ENCODE measurements at regions of chr9 and their contacts with region 1.

Region 1: GRCh38 chr9:35116898-35117551 is 1.4 kb upstream of the ATOSB start:
- DNase-seq: peak; percentile 84
- H3K4me3 ChIP-seq: peak overlapping the region; percentile 98
- H3K27ac ChIP-seq: no peak overlapping the region
- H3K27me3 ChIP-seq: no peaks in the 10 kb centered on the region
- CTCF ChIP-seq: peak; percentile 95

Region 2: DNA sequence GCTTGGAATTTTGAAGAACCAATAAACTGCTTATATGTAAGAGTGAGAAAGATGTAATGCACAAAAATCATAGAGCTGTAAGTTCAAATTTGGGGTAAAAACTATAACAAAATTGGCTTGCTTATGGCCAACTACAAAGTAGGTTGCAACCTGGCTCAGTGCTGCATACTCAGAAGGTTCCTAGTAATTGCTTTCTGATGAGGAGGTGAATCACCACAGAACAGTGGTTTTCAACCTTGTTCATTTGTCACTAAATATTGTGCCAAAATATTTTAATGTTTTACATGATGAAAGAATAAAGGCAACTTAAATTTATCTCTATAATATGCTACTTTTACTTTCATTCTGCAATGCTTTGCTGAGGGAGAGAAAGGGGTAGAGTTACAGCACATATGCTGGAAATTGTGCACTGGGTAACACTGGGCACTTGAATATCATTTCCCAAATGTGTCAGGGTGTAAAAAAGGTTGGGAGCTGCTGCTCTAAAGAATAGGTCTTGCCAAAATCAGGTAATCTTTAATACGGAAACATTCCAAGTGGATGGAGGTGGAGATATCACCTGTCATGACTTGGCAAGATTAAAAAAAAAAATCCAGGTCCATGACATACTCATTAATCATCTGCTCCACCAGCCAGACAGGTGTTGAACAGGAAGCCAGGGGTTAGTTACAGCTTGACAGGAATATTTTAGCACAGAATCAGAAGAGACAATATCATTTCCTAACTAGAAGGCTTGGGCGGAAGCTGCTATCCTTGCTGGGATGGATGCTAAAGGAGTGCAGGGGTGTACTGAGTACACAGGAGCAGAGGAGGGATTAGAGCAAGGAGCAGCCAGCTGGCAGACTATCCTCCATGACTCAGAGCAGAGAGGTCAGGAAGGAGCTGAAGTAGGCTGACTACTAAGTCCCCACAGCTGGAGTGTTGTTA is 372.5 kb before region 1 on chr9:
- CTCF ChIA-PET with region 1: interaction called, 10 read pairs
- POLR2A ChIA-PET with region 1: no interaction called
- DNase-seq: peak; percentile 11
- H3K4me3 ChIP-seq: no peak overlapping the region
- H3K27ac ChIP-seq: no peak overlapping the region
- H3K27me3 ChIP-seq: no peaks in the 10 kb centered on the region
- CTCF ChIP-seq: no peak

Region 3: GRCh38 chr9:35102926-35103659 is 13.9 kb before region 1 on chr9 and contains the start of gene STOML2:
- CTCF ChIA-PET with region 1: interaction called, 3 read pairs
- POLR2A ChIA-PET with region 1: interaction called, 12 read pairs
- DNase-seq: peak; percentile 90
- H3K4me3 ChIP-seq: peak within 1 kb of the TSS; percentile 82
- H3K27ac ChIP-seq: peak within 1 kb of the TSS; percentile 55
- H3K27me3 ChIP-seq: no peaks in the 10 kb centered on the region
- CTCF ChIP-seq: no peak
- polyA plus RNA-seq, gene STOML2: 125 and 151 TPM in 2 replicates

Region 4: GRCh38 chr9:35226660-35227059 is 109.6 kb after region 1 on chr9:
- CTCF ChIA-PET with region 1: no interaction called
- POLR2A ChIA-PET with region 1: no interaction called
- DNase-seq: no peak
- H3K4me3 ChIP-seq: no peak overlapping the region
- H3K27ac ChIP-seq: no peak overlapping the region
- H3K27me3 ChIP-seq: no peaks in the 10 kb centered on the region
- CTCF ChIP-seq: no peak

Region 5: DNA sequence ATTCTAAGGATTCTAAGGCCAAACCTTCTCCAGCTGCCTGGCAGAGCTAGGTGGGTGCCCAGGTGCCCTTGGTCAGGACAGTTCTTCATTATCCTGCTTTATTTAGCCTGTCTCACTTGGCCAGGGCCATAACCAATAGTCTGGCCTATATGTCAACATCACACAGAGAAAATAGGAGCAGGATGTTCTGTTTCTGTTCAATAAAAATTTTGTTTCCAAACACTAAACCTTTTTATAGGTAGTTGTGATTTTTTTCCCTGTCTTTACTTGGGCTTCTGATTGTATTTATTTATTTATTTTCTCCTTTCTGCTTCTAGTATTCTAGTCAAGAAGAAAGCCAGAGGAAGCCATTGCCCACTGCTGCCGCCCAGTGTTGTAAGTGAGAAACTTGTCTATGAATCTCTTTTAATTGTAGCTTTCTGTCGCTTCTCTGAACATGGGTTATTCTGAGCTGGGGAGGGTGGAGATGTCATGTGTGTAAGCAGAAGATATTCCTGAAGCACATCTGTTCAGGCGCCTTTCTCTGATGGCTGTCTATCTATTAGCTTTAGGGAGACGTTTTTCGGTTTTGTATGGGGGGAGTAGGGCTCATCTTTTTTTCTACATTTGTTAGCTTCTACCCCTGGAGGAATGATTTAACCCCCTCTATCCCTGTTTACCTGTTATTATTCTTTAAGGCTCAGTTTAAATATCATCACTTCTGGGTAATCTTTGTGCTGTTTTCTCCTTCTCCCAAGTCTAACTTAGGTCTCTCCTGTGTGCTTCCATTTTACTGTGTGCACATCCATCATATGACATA is 141.8 kb after region 1 on chr9:
- CTCF ChIA-PET with region 1: interaction called, 58 read pairs
- POLR2A ChIA-PET with region 1: no interaction called
- DNase-seq: peak; percentile 34
- H3K4me3 ChIP-seq: no peak overlapping the region
- H3K27ac ChIP-seq: no peak overlapping the region
- H3K27me3 ChIP-seq: no peaks in the 10 kb centered on the region
- CTCF ChIP-seq: peak; percentile 85

Region 6: DNA sequence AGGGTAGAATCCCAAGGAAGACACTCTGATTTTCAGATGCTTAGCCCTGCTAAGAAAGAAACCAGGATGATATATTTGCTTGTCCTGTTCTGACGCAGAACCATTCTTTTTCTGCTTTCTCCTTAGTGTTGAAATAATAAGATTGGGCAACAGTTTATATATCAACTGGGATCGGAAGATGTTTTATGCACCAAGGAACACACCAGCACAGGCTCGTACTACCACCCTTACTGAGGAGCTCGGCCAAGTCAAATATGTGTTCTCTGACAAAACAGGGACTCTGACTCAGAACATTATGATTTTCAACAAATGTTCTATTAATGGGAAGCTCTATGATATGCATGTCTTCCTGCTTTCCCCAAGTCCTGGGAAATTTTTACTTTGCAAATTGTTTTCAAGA is 353.9 kb after region 1 on chr9:
- CTCF ChIA-PET with region 1: interaction called, 39 read pairs
- POLR2A ChIA-PET with region 1: interaction called, 4 read pairs
- DNase-seq: peak; percentile 62
- H3K4me3 ChIP-seq: no peak overlapping the region
- H3K27ac ChIP-seq: no peak overlapping the region
- H3K27me3 ChIP-seq: peaks cover 6% of the 10 kb centered on the region
- CTCF ChIP-seq: no peak

Region 7: DNA sequence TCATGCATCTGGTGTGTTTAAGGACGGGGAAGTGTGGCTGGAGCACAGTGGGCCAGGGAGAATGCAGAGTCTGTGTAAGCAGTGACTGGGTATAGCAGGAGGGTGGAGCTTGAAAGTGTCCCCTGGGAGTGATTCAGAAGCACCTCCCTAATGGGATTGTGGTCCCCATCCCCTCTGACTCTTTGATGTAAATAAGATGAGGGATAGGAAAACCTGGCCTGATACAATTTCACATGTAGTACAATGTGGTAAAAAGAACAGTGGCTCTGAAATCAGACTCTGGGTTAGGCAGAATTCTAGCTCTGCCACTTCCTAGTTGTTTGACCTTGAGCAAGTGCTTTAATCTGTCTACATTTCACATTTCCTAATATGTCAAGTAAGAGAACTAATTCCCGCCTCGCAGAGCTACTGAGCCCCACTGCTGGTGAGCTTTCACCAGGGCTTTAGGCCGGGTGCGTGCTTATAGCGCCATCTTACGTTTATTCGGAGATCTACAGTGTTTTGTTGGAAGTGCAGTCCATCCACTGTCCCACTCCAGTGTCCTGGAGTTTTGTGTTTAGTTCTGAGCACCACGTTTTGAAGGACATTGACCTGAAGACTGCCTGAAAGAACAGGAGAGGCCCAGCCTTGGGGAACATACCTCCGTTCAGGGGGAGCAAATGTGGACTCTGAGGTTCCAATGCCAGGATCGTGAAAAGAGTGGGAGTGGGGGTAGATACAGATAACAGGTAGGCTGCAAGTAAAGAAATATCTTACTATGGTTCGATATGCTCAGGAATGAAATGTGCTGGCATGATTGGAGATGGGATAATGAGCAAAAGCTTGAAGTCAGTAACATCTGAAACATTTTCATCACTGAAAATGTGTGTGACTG is 436.9 kb after region 1 on chr9:
- CTCF ChIA-PET with region 1: interaction called, 13 read pairs
- POLR2A ChIA-PET with region 1: interaction called, 3 read pairs
- DNase-seq: peak; percentile 44
- H3K4me3 ChIP-seq: no peak overlapping the region
- H3K27ac ChIP-seq: no peak overlapping the region
- H3K27me3 ChIP-seq: no peaks in the 10 kb centered on the region
- CTCF ChIP-seq: peak; percentile 90

Measured in AG04450 (cell line).